HCT116 (cell line): ENCODE measurements at regions of chr19 and their contacts with region 1.

Region 1: GRCh38 chr19:42794765-42795164 is 29.3 kb upstream of the PSG8 start:
- DNase-seq: no peak
- ATAC-seq: no peak
- H3K4me3 ChIP-seq: no peak overlapping the region
- H3K27ac ChIP-seq: no peak overlapping the region
- H3K4me1 ChIP-seq: no peaks in the 10 kb centered on the region
- H3K27me3 ChIP-seq: no peaks in the 10 kb centered on the region
- CTCF ChIP-seq: no peak
- POLR2A ChIP-seq: no peak
- RAD21 ChIP-seq: no peak

Region 2: DNA sequence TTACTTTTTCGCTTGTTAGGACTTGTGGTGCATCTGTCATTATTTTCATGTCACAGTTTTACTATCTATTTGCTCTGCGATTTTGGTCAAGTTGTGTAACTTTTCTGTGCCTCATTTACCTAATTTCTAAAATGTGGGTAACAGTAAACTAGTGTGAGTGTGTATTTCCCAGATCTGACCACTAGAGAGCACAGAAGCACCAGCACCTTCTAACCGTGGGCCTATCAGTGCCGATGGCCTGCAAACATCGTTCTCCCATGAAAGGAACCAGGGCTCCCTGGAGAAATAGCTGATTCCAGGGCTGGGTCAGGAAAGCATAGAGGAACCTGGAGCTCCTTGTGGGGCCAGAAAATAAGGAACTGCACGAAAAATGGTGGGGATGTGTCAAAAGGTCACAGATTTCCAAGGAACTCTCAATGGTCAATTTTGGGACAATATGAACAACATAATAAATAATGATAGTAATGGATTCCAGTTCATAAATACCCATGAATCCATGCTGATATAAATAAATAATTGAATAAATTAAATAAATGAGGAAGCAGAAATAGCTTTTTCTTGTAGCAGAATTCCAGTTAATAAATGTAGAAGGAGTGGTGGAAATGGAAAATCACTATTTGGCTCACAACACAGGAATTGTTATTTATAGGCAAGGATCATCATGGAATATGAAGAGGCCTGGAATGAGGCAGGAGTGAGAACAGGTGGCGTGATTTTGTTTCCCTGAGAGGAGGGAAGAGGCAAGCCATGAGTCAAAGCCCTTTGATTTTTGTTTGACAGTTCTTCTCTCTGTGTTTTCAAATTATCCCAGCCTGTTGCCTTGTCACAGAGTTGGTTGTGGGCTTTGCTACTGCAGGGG is 231.2 kb before region 1 on chr19:
- CTCF ChIA-PET with region 1: interaction called, 5 read pairs
- POLR2A ChIA-PET with region 1: no interaction called
- RAD21 ChIA-PET with region 1: no interaction called
- intact Hi-C with region 1: loop called (anchors 5 kb)
- DNase-seq: peak; percentile 43
- ATAC-seq: peak; percentile 95
- H3K4me3 ChIP-seq: no peak overlapping the region
- H3K27ac ChIP-seq: no peak overlapping the region
- H3K4me1 ChIP-seq: peaks cover 0 to 3% of the 10 kb centered on the region in 2 experiments; a peak in 2 of 4 replicates
- H3K27me3 ChIP-seq: 0 out of 2 replicates have a peak, but pooled peaks cover 2% of the 10 kb centered on the region
- CTCF ChIP-seq: peak; percentile 36 to 76 (median 65); a peak in 5 of 6 replicates
- POLR2A ChIP-seq: no peak
- RAD21 ChIP-seq: peak; percentile 54

Region 3: GRCh38 chr19:42693764-42694350 is 100.9 kb before region 1 on chr19:
- CTCF ChIA-PET with region 1: interaction called, 14 read pairs
- POLR2A ChIA-PET with region 1: no interaction called
- RAD21 ChIA-PET with region 1: interaction called in 1 of 2 experiments, 3 read pairs
- intact Hi-C with region 1: no loop called
- DNase-seq: peak; percentile 41
- ATAC-seq: peak; percentile 100
- H3K4me3 ChIP-seq: no peak overlapping the region
- H3K27ac ChIP-seq: no peak overlapping the region
- H3K4me1 ChIP-seq: no peaks in the 10 kb centered on the region
- H3K27me3 ChIP-seq: no peaks in the 10 kb centered on the region; the same call in 1 of the 2 replicates
- CTCF ChIP-seq: peak; percentile 73 to 93 (median 88)
- POLR2A ChIP-seq: no peak
- RAD21 ChIP-seq: peak; percentile 75

Region 4: GRCh38 chr19:42881229-42881628 is 86.5 kb after region 1 on chr19:
- CTCF ChIA-PET with region 1: interaction called, 7 read pairs
- POLR2A ChIA-PET with region 1: no interaction called
- RAD21 ChIA-PET with region 1: interaction called in 1 of 2 experiments, 3 read pairs
- intact Hi-C with region 1: loop called (anchors 1 kb)
- DNase-seq: no peak
- ATAC-seq: no peak
- H3K4me3 ChIP-seq: no peak overlapping the region
- H3K27ac ChIP-seq: no peak overlapping the region
- H3K4me1 ChIP-seq: no peaks in the 10 kb centered on the region
- H3K27me3 ChIP-seq: no peaks in the 10 kb centered on the region
- CTCF ChIP-seq: peak; percentile 30 to 64 (median 57); a peak in 5 of 6 replicates
- POLR2A ChIP-seq: no peak
- RAD21 ChIP-seq: peak; percentile 37; the same call in 1 of the 2 replicates

Region 5: DNA sequence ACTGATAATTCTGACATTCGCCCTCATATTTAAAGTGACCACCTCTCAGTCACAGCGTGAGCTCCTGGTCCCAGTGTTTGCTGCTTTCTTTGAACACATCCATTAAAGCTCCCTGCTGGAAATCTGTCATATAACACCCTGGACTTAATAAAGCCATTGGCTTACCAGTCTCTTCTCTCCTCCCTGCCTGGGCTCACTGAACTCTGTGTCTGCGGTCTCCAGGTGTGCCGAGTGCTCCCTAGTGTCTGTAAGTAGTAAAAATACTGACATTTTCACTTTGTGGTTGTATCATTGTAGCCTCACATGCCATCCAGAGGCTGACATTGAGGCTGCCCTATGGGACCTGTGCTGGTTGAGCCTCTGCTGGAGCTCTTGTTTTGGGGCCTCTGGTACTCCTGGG is 234.1 kb after region 1 on chr19:
- CTCF ChIA-PET with region 1: no interaction called
- POLR2A ChIA-PET with region 1: no interaction called
- RAD21 ChIA-PET with region 1: no interaction called
- intact Hi-C with region 1: loop called (anchors 10 kb)
- DNase-seq: no peak
- ATAC-seq: no peak
- H3K4me3 ChIP-seq: no peak overlapping the region
- H3K27ac ChIP-seq: no peak overlapping the region
- H3K4me1 ChIP-seq: no peaks in the 10 kb centered on the region
- H3K27me3 ChIP-seq: no peaks in the 10 kb centered on the region
- CTCF ChIP-seq: no peak
- POLR2A ChIP-seq: no peak
- RAD21 ChIP-seq: no peak